Left ventricle myocardium inferior (tissue), 1 donor: ENCODE measurements at regions of chr9 and their contacts with region 1.

Region 1: DNA sequence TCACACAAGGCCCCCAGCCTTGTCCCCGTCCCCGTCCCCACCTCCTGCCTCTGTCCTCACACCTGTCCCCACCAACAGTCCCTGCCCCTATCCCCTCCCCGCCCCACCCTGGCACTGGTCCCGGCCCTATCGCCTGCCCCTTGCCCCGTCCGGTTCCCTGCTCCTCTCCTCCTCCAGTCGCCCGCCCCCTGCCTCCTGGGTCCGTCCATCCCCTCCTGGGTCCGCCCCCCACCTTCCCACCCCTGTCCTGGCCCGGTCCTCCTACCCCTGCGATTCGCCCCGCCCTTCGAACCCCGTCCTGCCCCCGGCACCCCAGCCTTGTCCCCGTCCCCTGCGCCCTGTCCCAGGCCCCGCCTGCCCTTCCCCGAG is 389 bp downstream of the EDF1 start:
- DNase-seq: no peak
- H3K4me3 ChIP-seq: peak overlapping the region; percentile 90
- H3K27ac ChIP-seq: peak overlapping the region; percentile 95
- H3K4me1 ChIP-seq: peaks cover 41% of the 10 kb centered on the region
- H3K27me3 ChIP-seq: no peaks in the 10 kb centered on the region
- CTCF ChIP-seq: no peak

Region 2: DNA sequence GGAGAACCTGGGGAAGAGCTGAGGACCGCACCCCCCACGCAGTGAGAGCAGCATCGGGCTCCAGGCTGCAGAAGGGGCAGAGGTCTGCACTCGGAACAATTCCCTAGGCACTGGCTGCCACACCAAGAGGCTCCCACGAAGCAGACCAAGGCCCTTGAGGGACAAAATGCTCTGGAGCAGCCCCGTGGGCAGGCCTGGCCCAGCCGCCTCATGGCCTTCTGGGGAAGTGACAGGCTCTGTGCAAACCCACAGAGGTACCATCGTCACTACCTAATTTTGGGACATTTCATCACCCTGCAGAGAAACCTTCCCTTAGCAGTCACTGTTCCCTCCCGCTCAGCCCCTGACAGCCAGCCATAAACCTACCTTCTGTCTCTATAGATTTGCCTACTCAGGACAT is 62.9 kb after region 1 on chr9:
- intact Hi-C with region 1: loop called (anchors 10 kb)
- DNase-seq: peak; percentile 62
- H3K4me3 ChIP-seq: peak overlapping the region; percentile 52
- H3K27ac ChIP-seq: peak overlapping the region; percentile 91
- H3K4me1 ChIP-seq: peaks cover 69% of the 10 kb centered on the region
- H3K27me3 ChIP-seq: no peaks in the 10 kb centered on the region
- CTCF ChIP-seq: peak; percentile 53